ENCODE measurements at regions of chrX and their contacts with region 1.

Region 1: DNA sequence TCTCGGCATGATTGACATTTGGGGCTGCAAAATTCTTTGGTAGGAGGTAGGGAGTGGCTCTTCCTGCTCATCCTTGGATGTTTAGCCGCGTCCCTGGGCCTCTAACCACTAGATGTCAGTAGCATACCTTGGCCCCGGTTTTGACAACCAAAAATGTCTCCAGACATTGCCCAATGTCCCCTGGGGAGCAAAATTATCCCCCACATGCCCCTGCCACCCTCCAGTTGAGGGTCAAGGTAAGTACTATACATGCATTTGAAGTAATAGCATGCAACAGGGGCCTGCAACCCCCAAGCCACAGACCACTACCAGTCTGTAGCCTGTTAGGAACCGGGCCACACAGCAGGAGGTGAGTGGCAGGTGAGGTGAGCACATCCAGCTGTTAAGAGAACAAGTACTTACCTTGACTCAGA is 17.6 kb upstream of the KIAA1210 start:
- DNase-seq: no peak
- H3K4me3 ChIP-seq: no peak overlapping the region
- H3K27ac ChIP-seq: no peak overlapping the region
- H3K4me1 ChIP-seq: no peaks in the 10 kb centered on the region
- H3K27me3 ChIP-seq: no peaks in the 10 kb centered on the region
- CTCF ChIP-seq: peak in 2 of 4 experiments; percentile 31 to 44
- POLR2A ChIP-seq: no peak

Region 2: GRCh38 chrX:119062750-119063374 is 82.4 kb before region 1 on chrX:
- intact Hi-C with region 1: no loop called
- DNase-seq: no peak
- H3K4me3 ChIP-seq: no peak overlapping the region
- H3K27ac ChIP-seq: no peak overlapping the region
- H3K4me1 ChIP-seq: no peaks in the 10 kb centered on the region
- H3K27me3 ChIP-seq: no peaks in the 10 kb centered on the region
- CTCF ChIP-seq: no peak
- POLR2A ChIP-seq: no peak

Region 3: GRCh38 chrX:119211649-119212014 is 66.4 kb after region 1 on chrX:
- intact Hi-C with region 1: loop called (anchors 5 kb)
- DNase-seq: no peak
- H3K4me3 ChIP-seq: no peak overlapping the region
- H3K27ac ChIP-seq: no peak overlapping the region
- H3K4me1 ChIP-seq: no peaks in the 10 kb centered on the region
- H3K27me3 ChIP-seq: no peaks in the 10 kb centered on the region
- CTCF ChIP-seq: no peak
- POLR2A ChIP-seq: no peak